Posterior cingulate gyrus (tissue), 11 donors: ENCODE measurements at regions of chr6 and their contacts with region 1.

Region 1: DNA sequence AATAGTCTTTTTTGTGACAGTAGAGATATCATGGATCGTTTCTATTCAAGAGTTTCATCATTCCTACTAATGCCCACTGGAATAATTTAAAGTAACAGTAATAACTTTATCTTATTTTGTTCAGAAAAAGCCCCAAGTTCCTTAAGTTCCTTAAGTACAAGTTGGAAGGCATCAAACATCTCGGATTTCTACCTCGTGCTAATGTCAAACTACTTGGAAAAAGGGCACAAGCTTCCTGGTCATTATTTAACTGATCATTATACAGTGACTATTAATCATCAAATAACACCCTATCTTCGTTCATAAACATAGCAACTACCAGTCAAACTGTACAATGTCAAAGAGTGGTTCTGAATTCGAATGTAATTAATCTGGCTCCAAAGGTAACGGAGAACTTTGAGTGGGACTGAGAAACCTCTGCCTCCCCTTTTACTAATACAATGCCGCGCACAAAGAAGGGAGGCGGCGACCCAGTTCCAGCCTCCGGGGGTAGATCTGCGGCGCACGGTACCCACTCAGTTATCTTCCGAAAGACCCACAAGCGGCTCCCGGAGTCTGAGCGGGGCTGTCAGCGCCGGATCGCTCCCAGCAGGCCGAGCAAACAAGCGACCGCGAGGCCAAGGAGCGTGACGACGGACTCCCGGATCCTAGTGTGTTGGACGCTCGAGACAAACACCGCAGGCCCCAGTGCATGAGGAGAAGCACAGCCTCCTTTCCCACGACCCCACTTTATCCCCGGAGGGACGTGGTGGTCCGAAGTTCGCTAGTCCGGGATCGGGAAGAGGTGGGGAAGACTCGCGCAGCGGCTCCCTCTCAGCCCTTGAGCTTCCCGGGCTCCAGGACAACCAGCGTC is 716 bp downstream of the SHPRH start:
- DNase-seq: peak in 8 of 10 donors; percentile 35 to 91 (median 48)

Region 2: GRCh38 chr6:145814501-145815308 is 148.7 kb before region 1 on chr6 and contains the start of gene FBXO30:
- intact Hi-C with region 1: loop called (anchors 10 kb)
- DNase-seq: peak; percentile 79 to 98 (median 86)

Region 3: GRCh38 chr6:146543211-146543939 is 579.9 kb after region 1 on chr6 and contains the start of gene RAB32:
- intact Hi-C with region 1: loop called (anchors 5 kb)
- DNase-seq: peak; percentile 67 to 97 (median 81)

Region 4: DNA sequence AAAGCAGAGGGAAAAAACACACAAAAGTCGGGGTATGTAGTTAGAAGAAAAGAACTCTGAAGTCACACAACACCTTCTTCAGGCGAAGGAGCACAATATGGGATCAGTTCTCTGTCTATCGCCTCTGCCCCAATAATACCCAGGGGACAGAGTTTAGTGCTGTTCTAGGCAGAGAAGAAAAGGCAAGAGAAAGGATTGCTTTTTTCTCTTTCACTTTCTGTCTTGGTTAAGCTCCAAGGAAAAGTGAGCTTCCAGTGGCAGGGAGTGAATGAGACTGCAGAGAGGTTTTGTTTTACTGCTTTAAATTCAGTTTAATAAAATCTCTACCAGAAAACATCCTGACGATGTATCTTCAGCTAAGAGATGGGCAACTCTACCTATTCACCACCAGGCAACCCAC is 1154.1 kb after region 1 on chr6:
- intact Hi-C with region 1: no loop called
- DNase-seq: no peak